ENCODE measurements at regions of chr2 and their contacts with region 1.

Region 1: GRCh38 chr2:64330281-64331113 is 123.5 kb upstream of the LGALSL start:
- DNase-seq: no peak
- ATAC-seq: peak; percentile 22
- H3K4me3 ChIP-seq: no peak overlapping the region
- H3K27ac ChIP-seq: no peak overlapping the region
- H3K4me1 ChIP-seq: peaks cover 41% of the 10 kb centered on the region
- H3K27me3 ChIP-seq: no peaks in the 10 kb centered on the region
- CTCF ChIP-seq: peak; percentile 82 to 92 (median 91)
- EP300 ChIP-seq: no peak
- POLR2A ChIP-seq: no peak
- RAD21 ChIP-seq: peak; percentile 97

Region 2: GRCh38 chr2:64119369-64119768 is 211.1 kb before region 1 on chr2:
- CTCF ChIA-PET with region 1: interaction called, 13 read pairs
- POLR2A ChIA-PET with region 1: no interaction called
- RAD21 ChIA-PET with region 1: interaction called, 18 read pairs
- SMC1A ChIA-PET with region 1: interaction called, 10 read pairs
- in situ Hi-C with region 1: no loop called
- intact Hi-C with region 1: no loop called
- DNase-seq: no peak
- ATAC-seq: no peak
- H3K4me3 ChIP-seq: no peak overlapping the region
- H3K27ac ChIP-seq: no peak overlapping the region; the same call in 1 of the 2 replicates
- H3K4me1 ChIP-seq: peaks cover 32% of the 10 kb centered on the region
- H3K27me3 ChIP-seq: no peaks in the 10 kb centered on the region
- CTCF ChIP-seq: no peak
- EP300 ChIP-seq: no peak
- POLR2A ChIP-seq: no peak
- RAD21 ChIP-seq: no peak

Region 3: GRCh38 chr2:64214281-64215115 is 116.0 kb before region 1 on chr2:
- CTCF ChIA-PET with region 1: interaction called, 117 read pairs
- POLR2A ChIA-PET with region 1: interaction called, 49 read pairs
- RAD21 ChIA-PET with region 1: interaction called, 186 read pairs
- SMC1A ChIA-PET with region 1: interaction called, 161 read pairs
- in situ Hi-C with region 1: no loop called
- intact Hi-C with region 1: loop called (anchors 1 kb)
- DNase-seq: peak; percentile 91
- ATAC-seq: peak; percentile 69
- H3K4me3 ChIP-seq: peak overlapping the region; percentile 28
- H3K27ac ChIP-seq: peak overlapping the region; percentile 98
- H3K4me1 ChIP-seq: peaks cover 44% of the 10 kb centered on the region
- H3K27me3 ChIP-seq: no peaks in the 10 kb centered on the region
- CTCF ChIP-seq: no peak
- EP300 ChIP-seq: peak; percentile 96 to 99
- POLR2A ChIP-seq: no peak
- RAD21 ChIP-seq: 0 out of 2 replicates have a peak, but pooled peaks have one; percentile 15

Region 4: DNA sequence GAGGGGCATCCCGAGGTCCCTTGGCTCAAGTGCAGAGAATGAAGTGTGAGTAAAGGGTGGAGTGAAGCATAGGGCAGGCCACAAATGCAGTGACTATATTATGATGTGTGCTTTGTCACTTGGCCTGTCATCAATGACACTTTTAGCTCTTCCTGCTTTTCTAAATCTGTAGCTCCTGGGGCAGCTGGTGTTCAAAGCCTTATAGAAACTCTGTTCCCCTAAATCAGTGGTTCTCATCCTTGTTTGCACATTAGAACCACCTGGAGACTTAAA is 12.1 kb before region 1 on chr2:
- CTCF ChIA-PET with region 1: interaction called, 97 read pairs
- POLR2A ChIA-PET with region 1: interaction called, 14 read pairs
- RAD21 ChIA-PET with region 1: interaction called, 83 read pairs
- SMC1A ChIA-PET with region 1: interaction called, 71 read pairs
- in situ Hi-C with region 1: no loop called
- intact Hi-C with region 1: no loop called
- DNase-seq: no peak
- ATAC-seq: peak; percentile 83
- H3K4me3 ChIP-seq: no peak overlapping the region
- H3K27ac ChIP-seq: no peak overlapping the region
- H3K4me1 ChIP-seq: peaks cover 13% of the 10 kb centered on the region
- H3K27me3 ChIP-seq: no peaks in the 10 kb centered on the region
- CTCF ChIP-seq: no peak
- EP300 ChIP-seq: 0 out of 4 replicates have a peak, but pooled peaks of 1 of the 2 experiments have one; percentile 13
- POLR2A ChIP-seq: no peak
- RAD21 ChIP-seq: no peak

Region 5: DNA sequence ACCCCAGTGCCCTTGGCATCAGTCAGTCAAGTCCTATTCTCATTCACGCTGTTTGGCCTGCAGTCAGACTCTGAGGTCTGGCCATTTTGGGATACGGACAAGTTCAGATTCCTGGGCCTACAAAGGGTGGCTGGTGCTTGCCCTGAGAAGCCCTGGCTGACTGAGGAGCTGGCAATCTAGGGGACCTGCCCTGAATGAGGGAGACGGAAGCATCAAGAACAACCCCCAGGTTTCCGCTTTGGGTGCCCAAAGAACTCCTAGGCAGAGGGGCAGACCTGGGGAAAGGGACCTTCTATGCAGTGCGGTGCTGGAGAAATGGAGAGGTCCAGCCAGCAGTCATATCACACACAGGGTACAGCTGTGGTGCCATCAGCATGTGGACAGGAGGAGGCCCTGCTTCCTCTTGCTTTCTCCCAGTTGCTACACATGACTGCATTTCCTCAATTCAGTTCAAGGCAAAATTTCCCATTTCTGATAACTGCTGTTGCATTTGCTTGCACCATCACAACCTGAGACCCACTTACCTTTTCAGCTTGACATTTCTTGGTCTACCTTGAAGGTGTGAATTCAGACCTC is 52.6 kb after region 1 on chr2:
- CTCF ChIA-PET with region 1: no interaction called
- POLR2A ChIA-PET with region 1: no interaction called
- RAD21 ChIA-PET with region 1: no interaction called
- SMC1A ChIA-PET with region 1: no interaction called
- in situ Hi-C with region 1: no loop called
- intact Hi-C with region 1: no loop called
- DNase-seq: no peak
- ATAC-seq: no peak
- H3K4me3 ChIP-seq: no peak overlapping the region
- H3K27ac ChIP-seq: no peak overlapping the region
- H3K4me1 ChIP-seq: no peaks in the 10 kb centered on the region
- H3K27me3 ChIP-seq: no peaks in the 10 kb centered on the region; a peak in 2 of 4 replicates
- CTCF ChIP-seq: no peak
- EP300 ChIP-seq: no peak
- POLR2A ChIP-seq: no peak
- RAD21 ChIP-seq: no peak

Region 6: GRCh38 chr2:64493788-64494187 is 163.3 kb after region 1 on chr2:
- CTCF ChIA-PET with region 1: interaction called, 467 read pairs
- POLR2A ChIA-PET with region 1: interaction called, 5 read pairs
- RAD21 ChIA-PET with region 1: interaction called, 240 read pairs
- SMC1A ChIA-PET with region 1: interaction called, 300 read pairs
- in situ Hi-C with region 1: loop called (anchors 5 kb)
- intact Hi-C with region 1: loop called (anchors 1 kb)
- DNase-seq: no peak
- ATAC-seq: no peak
- H3K4me3 ChIP-seq: no peak overlapping the region
- H3K27ac ChIP-seq: no peak overlapping the region
- H3K4me1 ChIP-seq: no peaks in the 10 kb centered on the region; the same call in 1 of the 2 replicates
- H3K27me3 ChIP-seq: peaks cover 0 to 1% of the 10 kb centered on the region in 2 experiments; a peak in 3 of 4 replicates
- CTCF ChIP-seq: no peak
- EP300 ChIP-seq: no peak
- POLR2A ChIP-seq: no peak
- RAD21 ChIP-seq: no peak

Region 7: DNA sequence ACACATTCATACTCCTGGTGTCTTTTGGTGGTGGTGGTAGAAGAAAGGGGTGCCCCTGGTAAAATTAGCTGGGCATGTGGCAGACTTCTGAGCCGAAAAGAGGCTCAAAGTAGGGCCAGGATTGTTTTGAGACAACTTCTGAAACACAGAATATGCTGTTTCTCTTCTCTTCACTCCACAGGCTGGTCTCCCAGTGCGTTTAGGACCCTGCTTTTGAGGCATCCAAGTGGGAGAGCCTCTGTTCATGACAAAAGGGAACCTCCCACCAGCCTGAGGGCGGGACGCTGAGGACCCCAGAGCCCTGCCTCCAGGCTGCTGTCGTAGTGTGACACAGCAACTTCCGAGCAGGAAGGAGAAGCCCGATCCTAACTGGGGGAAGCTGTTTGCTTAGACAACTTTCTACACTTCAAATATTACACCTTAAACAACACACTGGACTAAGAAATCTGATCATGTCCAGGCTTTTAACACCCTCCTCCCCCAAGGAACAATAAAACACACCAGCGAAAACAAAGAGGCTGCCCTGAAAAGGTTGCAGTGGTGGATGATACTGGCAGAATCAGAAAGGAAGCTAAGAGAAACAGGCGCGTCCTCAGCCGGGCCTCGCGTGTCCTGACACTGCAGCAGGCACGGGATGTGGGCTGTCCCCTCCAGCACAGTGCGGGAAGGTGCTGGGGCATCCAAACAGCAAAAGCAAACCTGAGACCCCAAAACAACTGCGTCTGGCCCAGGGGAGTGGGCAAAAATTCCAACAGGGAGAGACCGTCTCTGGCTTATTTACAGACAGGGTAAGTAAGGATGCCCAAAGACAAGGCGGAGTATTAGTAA is 313.9 kb after region 1 on chr2:
- CTCF ChIA-PET with region 1: interaction called, 17 read pairs
- POLR2A ChIA-PET with region 1: interaction called, 3 read pairs
- RAD21 ChIA-PET with region 1: interaction called, 7 read pairs
- SMC1A ChIA-PET with region 1: interaction called, 5 read pairs
- in situ Hi-C with region 1: no loop called
- intact Hi-C with region 1: no loop called
- DNase-seq: no peak
- ATAC-seq: peak; percentile 76
- H3K4me3 ChIP-seq: peak overlapping the region; percentile 87
- H3K27ac ChIP-seq: peak overlapping the region; percentile 95
- H3K4me1 ChIP-seq: peaks cover 46% of the 10 kb centered on the region
- H3K27me3 ChIP-seq: no peaks in the 10 kb centered on the region
- CTCF ChIP-seq: no peak
- EP300 ChIP-seq: no peak; a peak in 1 of 4 replicates
- POLR2A ChIP-seq: peak; percentile 74
- RAD21 ChIP-seq: no peak

Region 8: GRCh38 chr2:65040400-65041261 is 710.1 kb after region 1 on chr2:
- CTCF ChIA-PET with region 1: interaction called, 3 read pairs
- POLR2A ChIA-PET with region 1: no interaction called
- RAD21 ChIA-PET with region 1: no interaction called
- SMC1A ChIA-PET with region 1: interaction called, 4 read pairs
- in situ Hi-C with region 1: loop called (anchors 5 kb)
- intact Hi-C with region 1: loop called (anchors 5 kb)
- DNase-seq: no peak
- ATAC-seq: peak; percentile 99
- H3K4me3 ChIP-seq: no peak overlapping the region
- H3K27ac ChIP-seq: no peak overlapping the region
- H3K4me1 ChIP-seq: peaks cover 2% of the 10 kb centered on the region; the same call in 1 of the 2 replicates
- H3K27me3 ChIP-seq: no peaks in the 10 kb centered on the region
- CTCF ChIP-seq: peak; percentile 93 to 96 (median 95)
- EP300 ChIP-seq: no peak
- POLR2A ChIP-seq: no peak
- RAD21 ChIP-seq: peak; percentile 83